ENCODE measurements at regions of chr19 and their contacts with region 1.

Region 1: GRCh38 chr19:2820112-2820702 is 539 bp downstream of the ZNF554 start:
- DNase-seq: no peak
- H3K4me3 ChIP-seq: peak overlapping the region; percentile 97 to 98
- H3K27ac ChIP-seq: peak overlapping the region in 1 of 2 donors; percentile 29
- H3K4me1 ChIP-seq: peaks cover 3 to 10% of the 10 kb centered on the region in 2 donors
- H3K27me3 ChIP-seq: no peaks in the 10 kb centered on the region
- CTCF ChIP-seq: no peak

Region 2: GRCh38 chr19:2840794-2841790 is 20.9 kb after region 1 on chr19 and contains the start of gene ZNF555:
- intact Hi-C with region 1: loop called (anchors 1 kb)
- DNase-seq: peak; percentile 99 to 100
- H3K4me3 ChIP-seq: peak within 1 kb of the TSS; percentile 96 to 99
- H3K27ac ChIP-seq: peak within 1 kb of the TSS; percentile 95
- H3K4me1 ChIP-seq: peaks cover 0 to 10% of the 10 kb centered on the region in 2 donors
- H3K27me3 ChIP-seq: no peaks in the 10 kb centered on the region
- CTCF ChIP-seq: peak; percentile 32 to 74 (median 61)
- total RNA-seq, gene ZNF555: 6.8 TPM